ENCODE measurements at regions of chr20 and their contacts with region 1.

Region 1: GRCh38 chr20:60040471-60041162 is 82.4 kb downstream of the CDH26 start:
- DNase-seq: no peak
- H3K4me3 ChIP-seq: no peak overlapping the region
- H3K27ac ChIP-seq: peak overlapping the region; percentile 76
- H3K4me1 ChIP-seq: peaks cover 26% of the 10 kb centered on the region
- H3K27me3 ChIP-seq: no peaks in the 10 kb centered on the region
- CTCF ChIP-seq: no peak

Region 2: DNA sequence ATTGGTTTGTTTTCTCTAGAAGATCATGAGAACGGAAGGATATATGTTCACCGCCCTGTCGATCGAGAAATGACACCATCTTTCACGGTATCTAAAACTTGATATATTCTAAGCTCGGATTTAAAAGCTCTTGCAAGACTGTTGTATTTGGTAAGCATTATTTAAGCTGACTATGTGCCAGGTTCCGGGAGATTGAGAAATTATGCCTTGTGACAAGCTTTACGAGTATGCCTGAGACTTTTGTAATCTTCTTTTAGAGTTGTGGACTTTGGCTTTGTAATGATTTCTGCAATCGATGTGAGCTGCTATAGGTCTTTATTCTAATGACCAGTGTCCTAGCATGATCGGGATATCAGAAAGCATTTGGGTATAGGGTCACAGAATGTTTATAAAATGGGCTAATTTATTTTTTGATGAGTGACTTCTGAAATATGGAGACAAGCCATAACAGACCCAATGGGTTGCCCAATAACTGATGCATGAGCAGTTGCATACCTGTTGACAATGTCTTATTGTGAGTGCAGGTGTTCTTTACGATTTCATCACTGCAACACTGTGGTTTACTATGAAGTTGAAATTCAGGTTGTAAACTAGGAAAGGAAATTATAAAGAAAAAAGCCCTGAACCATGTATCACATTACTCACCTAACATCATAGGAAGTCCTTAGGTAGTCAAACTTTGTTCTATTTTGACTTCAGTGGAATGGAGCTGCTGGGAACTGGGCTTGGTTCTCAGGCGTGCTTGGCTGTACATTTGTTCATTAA is 68.4 kb before region 1 on chr20:
- CTCF ChIA-PET with region 1: no interaction called
- dilution Hi-C with region 1: no loop called
- in situ Hi-C with region 1: no loop called
- intact Hi-C with region 1: loop called (anchors 5 kb)
- DNase-seq: peak; percentile 98
- H3K4me3 ChIP-seq: no peak overlapping the region
- H3K27ac ChIP-seq: peak overlapping the region; percentile 93
- H3K4me1 ChIP-seq: peaks cover 28% of the 10 kb centered on the region
- H3K27me3 ChIP-seq: no peaks in the 10 kb centered on the region
- CTCF ChIP-seq: no peak

Region 3: GRCh38 chr20:59985864-59986263 is 54.8 kb before region 1 on chr20:
- CTCF ChIA-PET with region 1: no interaction called
- dilution Hi-C with region 1: no loop called
- in situ Hi-C with region 1: no loop called
- intact Hi-C with region 1: loop called (anchors 5 kb)
- DNase-seq: no peak
- H3K4me3 ChIP-seq: no peak overlapping the region
- H3K27ac ChIP-seq: no peak overlapping the region
- H3K4me1 ChIP-seq: peaks cover 23% of the 10 kb centered on the region
- H3K27me3 ChIP-seq: no peaks in the 10 kb centered on the region
- CTCF ChIP-seq: no peak

Region 4: GRCh38 chr20:60306551-60306950 is 265.9 kb after region 1 on chr20:
- CTCF ChIA-PET with region 1: no interaction called
- dilution Hi-C with region 1: no loop called
- in situ Hi-C with region 1: no loop called
- intact Hi-C with region 1: no loop called
- DNase-seq: no peak
- H3K4me3 ChIP-seq: no peak overlapping the region
- H3K27ac ChIP-seq: no peak overlapping the region
- H3K4me1 ChIP-seq: no peaks in the 10 kb centered on the region
- H3K27me3 ChIP-seq: no peaks in the 10 kb centered on the region
- CTCF ChIP-seq: no peak